ENCODE measurements at regions of chr12 and their contacts with region 1.

Region 1: GRCh38 chr12:27652174-27652763 is 44.0 kb upstream of the REP15 start:
- DNase-seq: peak; percentile 71
- ATAC-seq: peak; percentile 74
- H3K4me3 ChIP-seq: no peak overlapping the region
- H3K27ac ChIP-seq: no peak overlapping the region
- H3K4me1 ChIP-seq: no peaks in the 10 kb centered on the region
- H3K27me3 ChIP-seq: no peaks in the 10 kb centered on the region
- CTCF ChIP-seq: peak; percentile 80
- EP300 ChIP-seq: no peak
- POLR2A ChIP-seq: no peak
- RAD21 ChIP-seq: peak; percentile 23; the same call in 1 of the 2 replicates

Region 2: DNA sequence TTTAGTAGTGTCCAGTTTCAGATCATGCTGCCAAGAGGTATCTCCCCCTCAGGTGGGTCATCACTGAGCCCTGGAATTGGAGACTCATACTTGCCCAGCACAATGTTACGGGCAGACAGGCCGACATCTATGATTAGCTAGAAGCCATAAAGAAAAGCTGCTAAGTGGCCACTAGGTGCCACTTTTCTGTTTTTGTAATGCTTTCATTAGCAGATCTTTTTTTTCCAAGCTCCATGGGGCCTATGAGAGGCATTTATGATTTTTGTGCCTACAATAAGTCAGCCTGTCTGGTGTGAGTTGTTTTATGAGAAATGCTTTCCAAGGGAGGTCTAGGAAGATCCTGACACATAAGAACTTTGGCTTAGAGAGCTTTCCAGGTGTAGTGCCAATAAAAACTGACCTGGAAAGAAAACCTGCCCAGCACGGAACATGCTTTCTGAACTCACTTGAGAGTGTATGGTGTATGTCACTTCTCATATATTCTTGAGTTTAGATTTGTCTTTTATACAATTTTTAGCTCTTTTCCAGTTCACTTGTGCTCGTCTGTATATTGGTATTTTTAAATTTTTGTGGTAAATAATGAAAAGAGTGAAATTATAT is 227.5 kb before region 1 on chr12:
- CTCF ChIA-PET with region 1: interaction called, 9 read pairs
- POLR2A ChIA-PET with region 1: no interaction called
- in situ Hi-C with region 1: no loop called
- intact Hi-C with region 1: loop called (anchors 1 kb)
- DNase-seq: peak; percentile 45
- ATAC-seq: peak; percentile 78
- H3K4me3 ChIP-seq: no peak overlapping the region
- H3K27ac ChIP-seq: no peak overlapping the region
- H3K4me1 ChIP-seq: no peaks in the 10 kb centered on the region
- H3K27me3 ChIP-seq: no peaks in the 10 kb centered on the region
- CTCF ChIP-seq: peak; percentile 50
- EP300 ChIP-seq: no peak
- POLR2A ChIP-seq: no peak
- RAD21 ChIP-seq: no peak

Region 3: DNA sequence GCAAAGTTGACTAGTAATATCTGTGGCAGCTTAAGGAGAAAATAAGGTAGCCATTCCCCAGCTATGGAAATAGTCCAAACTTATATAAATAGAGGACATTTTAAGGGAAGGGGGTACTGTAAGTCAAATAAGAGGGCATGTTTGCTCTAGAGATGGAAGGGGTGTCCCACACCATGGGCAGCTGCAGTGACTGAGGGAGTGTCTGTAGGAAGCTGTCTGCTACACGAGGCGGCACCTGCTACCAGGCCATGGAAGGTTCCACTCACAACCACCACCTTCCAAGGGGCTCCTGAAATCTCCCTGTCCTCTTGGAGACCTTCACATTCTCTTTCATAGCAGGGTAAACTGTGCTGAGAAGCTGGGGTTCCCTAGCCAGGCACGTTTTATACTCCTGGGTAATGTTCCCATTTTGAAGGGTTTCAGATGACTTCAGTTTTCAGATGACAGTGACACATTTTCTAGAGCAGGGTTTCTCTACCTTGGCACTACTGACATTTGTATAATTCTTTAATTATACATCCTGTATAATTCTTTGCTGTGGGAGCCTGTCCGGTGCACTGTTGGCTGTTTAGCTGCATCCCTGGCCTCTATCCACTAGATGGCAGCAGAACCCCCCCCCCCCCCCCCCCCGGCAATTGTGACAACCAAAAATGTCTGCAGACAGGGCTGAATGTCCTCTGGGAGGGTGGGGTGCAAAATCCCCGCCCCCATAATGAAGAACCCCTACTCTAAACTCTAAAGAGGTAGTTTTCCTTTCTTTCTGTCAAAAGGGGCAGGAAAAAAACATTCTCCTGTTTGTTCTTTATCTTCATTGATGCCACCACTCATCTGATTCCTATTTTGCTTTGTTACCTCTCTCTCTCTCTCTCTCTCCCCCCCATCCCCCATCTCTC is 217.3 kb before region 1 on chr12:
- CTCF ChIA-PET with region 1: interaction called, 8 read pairs
- POLR2A ChIA-PET with region 1: no interaction called
- in situ Hi-C with region 1: loop called (anchors 5 kb)
- intact Hi-C with region 1: loop called (anchors 1 kb)
- DNase-seq: no peak
- ATAC-seq: peak; percentile 61
- H3K4me3 ChIP-seq: no peak overlapping the region
- H3K27ac ChIP-seq: no peak overlapping the region
- H3K4me1 ChIP-seq: peaks cover 10% of the 10 kb centered on the region
- H3K27me3 ChIP-seq: no peaks in the 10 kb centered on the region
- CTCF ChIP-seq: peak; percentile 39
- EP300 ChIP-seq: no peak
- POLR2A ChIP-seq: no peak
- RAD21 ChIP-seq: no peak